Activated T-helper 1 cell treated with anti-CD3 and anti-CD28 coated beads, Interleukin-12 subunit alpha, Interleukin-12 subunit beta, Interleukin-2, Interleukin-4 antibody, amounts not matched to agents 30 ng/mL and 10 ng/mL and 1 ng/mL, durations not matched to agents 14 hours and 24 hours and 36 hours (primary cell): ENCODE measurements at regions of chr13 and their contacts with region 1.

Region 1: DNA sequence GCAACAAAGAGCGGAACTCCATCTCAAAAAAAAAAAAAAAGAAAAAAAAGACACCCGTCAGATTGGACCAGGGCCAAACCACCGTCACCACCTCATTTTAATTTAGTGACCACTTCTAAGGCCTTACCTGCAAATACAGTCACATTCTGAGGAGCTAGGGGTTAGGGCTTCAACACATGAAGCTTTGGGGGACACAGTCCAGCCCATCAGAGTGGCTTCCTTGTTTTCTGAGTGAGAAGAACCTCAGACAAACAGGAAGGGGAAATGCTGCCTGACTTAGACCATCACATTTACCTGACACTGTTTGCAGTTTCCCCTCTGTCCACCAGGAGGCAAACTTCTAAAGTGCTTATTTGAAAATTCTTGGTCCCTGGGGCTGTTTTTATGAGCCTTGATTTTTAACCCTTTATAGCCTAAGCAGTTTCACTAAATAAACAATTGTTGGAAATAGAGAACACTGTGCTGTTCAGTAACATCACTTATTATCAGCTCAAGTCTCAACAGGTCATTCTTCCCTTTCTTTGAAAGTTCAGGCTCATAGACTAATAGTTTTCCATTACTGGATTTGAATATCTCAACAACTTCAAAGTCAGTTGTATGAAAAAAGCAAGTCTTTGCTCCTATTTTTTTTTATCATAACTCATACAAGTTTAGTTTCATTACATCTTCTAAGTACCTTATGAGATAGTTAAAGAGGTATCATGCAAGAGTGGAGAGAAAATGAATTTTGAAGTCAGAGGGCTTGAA is 74.9 kb upstream of the WASF3 start:
- DNase-seq: peak; percentile 53
- H3K4me3 Mint-ChIP-seq: no peak overlapping the region
- H3K27ac Mint-ChIP-seq: no peak overlapping the region
- H3K4me1 Mint-ChIP-seq: peaks cover 7% of the 10 kb centered on the region
- H3K27me3 Mint-ChIP-seq: no peaks in the 10 kb centered on the region

Region 2: GRCh38 chr13:25707726-25708125 is 774.9 kb before region 1 on chr13:
- intact Hi-C with region 1: no loop called
- DNase-seq: no peak
- H3K4me3 Mint-ChIP-seq: no peak overlapping the region
- H3K27ac Mint-ChIP-seq: no peak overlapping the region
- H3K4me1 Mint-ChIP-seq: no peaks in the 10 kb centered on the region
- H3K27me3 Mint-ChIP-seq: peaks cover 14% of the 10 kb centered on the region

Region 3: DNA sequence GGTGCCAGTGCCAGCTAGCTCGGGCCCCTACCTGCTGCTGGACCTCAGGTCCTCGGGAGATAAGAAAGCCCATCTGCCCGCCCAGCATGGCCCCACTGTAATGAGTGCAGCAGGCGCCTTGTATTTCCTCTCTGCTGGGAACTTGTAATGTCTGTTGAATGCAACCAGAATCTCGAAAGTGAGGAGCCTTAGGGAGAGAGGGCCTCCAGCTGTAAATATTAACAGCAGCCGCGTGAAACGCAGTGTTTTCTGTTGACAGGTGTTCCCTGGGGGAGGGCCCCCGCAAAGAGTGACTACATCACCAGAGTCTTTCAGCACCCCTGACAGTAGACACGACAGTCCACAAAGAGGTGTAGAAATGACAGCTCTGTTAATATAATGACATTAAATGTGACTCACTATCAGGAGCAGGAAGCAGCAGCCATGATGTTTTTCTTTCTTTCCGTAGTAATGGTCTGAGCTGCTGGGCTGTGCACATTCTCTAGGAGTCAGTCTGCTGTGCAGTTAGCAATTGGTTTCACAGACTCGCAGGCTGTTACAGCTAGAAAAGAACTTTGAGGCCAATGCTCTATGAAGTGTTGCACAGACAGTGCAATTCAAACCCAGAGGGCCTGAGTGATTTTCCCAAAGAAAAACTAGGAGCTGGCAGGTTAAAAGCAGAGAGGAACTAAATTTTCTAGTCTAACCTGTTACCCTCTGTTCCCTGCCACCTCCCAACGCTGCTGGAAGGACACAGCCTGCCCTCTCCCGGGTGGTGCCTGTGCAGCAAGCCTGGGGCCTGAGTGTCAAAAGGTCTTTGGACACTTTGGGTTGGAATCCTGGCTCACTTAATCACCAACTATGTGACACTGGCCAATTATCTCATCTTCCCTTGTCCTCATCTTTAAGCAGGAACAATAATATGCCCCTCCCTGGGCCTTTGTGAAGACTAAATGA is 16.3 kb after region 1 on chr13:
- intact Hi-C with region 1: loop called (anchors 1 kb)
- DNase-seq: no peak
- H3K4me3 Mint-ChIP-seq: no peak overlapping the region
- H3K27ac Mint-ChIP-seq: no peak overlapping the region
- H3K4me1 Mint-ChIP-seq: peaks cover 4% of the 10 kb centered on the region
- H3K27me3 Mint-ChIP-seq: peaks cover 3% of the 10 kb centered on the region

Region 4: GRCh38 chr13:26529441-26529840 is 46.8 kb after region 1 on chr13:
- intact Hi-C with region 1: no loop called
- DNase-seq: no peak
- H3K4me3 Mint-ChIP-seq: no peak overlapping the region
- H3K27ac Mint-ChIP-seq: no peak overlapping the region
- H3K4me1 Mint-ChIP-seq: no peaks in the 10 kb centered on the region
- H3K27me3 Mint-ChIP-seq: no peaks in the 10 kb centered on the region

Region 5: GRCh38 chr13:26568132-26568815 is 85.7 kb after region 1 on chr13:
- intact Hi-C with region 1: no loop called
- DNase-seq: no peak
- H3K4me3 Mint-ChIP-seq: no peak overlapping the region
- H3K27ac Mint-ChIP-seq: no peak overlapping the region
- H3K4me1 Mint-ChIP-seq: no peaks in the 10 kb centered on the region
- H3K27me3 Mint-ChIP-seq: peaks cover 5% of the 10 kb centered on the region

Region 6: GRCh38 chr13:26698392-26699196 is 216.0 kb after region 1 on chr13:
- intact Hi-C with region 1: loop called (anchors 1 kb)
- DNase-seq: peak; percentile 68
- H3K4me3 Mint-ChIP-seq: no peak overlapping the region
- H3K27ac Mint-ChIP-seq: no peak overlapping the region
- H3K4me1 Mint-ChIP-seq: peaks cover 6% of the 10 kb centered on the region
- H3K27me3 Mint-ChIP-seq: peaks cover 6% of the 10 kb centered on the region

Region 7: DNA sequence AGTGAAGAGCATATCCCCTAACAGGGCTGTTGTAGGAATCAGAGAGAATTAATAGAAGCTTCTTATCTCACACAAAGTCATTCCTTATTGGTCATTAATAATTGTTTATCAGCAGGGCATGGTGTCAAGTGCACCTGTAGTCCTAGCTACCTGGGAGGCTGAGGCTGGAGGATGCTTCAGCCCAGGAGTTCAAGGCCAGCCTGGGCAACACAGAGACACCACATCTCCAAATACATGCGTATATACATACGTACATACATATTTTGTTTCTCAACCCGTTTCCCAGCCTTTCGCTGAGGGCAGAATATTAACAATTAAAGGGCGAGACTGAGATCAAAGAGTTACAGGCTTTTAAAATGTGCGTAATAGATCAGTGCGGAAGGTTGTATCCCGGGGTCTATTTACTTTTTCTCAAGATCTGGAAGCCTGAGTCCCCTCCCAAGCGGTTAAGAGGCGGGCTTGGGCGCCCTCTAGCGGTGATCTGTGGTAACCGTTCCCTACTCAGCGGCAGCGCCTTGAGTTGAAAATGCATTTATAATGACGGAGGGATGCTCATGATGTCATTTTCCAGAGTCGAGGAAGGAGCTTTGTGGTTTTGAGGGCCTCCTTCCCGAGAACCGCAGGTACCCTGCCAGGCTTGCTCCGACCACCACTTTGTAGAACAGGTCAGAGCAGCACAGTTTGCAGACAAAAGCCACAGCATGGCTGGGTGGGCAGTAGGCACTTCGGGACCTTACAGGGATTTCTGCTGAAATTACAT is 447.5 kb after region 1 on chr13:
- intact Hi-C with region 1: loop called (anchors 1 kb)
- DNase-seq: peak; percentile 44
- H3K4me3 Mint-ChIP-seq: no peak overlapping the region
- H3K27ac Mint-ChIP-seq: no peak overlapping the region
- H3K4me1 Mint-ChIP-seq: no peaks in the 10 kb centered on the region
- H3K27me3 Mint-ChIP-seq: peaks cover 10% of the 10 kb centered on the region